SK-N-SH (cell line): ENCODE measurements at regions of chr6 and their contacts with region 1.

Region 1: DNA sequence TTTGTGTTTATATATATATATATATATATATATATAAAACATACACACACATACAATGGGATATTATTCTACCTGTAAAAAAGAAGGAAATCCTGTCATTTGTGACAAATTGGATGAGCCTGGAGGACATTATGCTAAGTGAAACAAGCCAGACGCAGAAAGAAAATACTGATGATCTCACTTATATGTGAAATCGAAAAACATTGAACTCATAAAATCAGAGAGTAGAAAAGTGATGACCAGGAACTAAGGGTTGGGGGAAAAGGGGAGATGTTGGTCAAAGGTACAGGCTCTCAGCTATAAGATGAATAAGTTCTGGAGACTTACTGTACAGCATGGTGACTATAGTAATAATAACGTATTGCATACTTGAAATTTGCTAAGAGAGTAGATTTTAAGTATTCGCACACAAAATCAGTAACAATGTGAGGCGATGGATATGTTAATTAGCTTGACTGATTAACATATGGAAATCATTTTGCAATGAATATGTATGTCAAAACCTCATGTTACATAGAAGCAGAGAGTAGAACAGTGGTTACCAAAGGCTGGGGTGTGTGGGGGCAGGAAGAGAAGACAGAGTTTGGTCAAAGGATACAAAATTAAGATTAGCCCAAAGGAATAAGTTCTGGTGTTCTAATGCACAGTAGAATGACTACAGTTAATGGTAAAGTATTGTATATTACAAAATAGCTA is 92.3 kb upstream of the PHACTR1 start:
- DNase-seq: no peak
- H3K4me3 ChIP-seq: no peak overlapping the region
- H3K27ac ChIP-seq: no peak overlapping the region
- H3K4me1 ChIP-seq: no peaks in the 10 kb centered on the region
- H3K27me3 ChIP-seq: no peaks in the 10 kb centered on the region
- CTCF ChIP-seq: no peak
- EP300 ChIP-seq: no peak
- RAD21 ChIP-seq: no peak

Region 2: DNA sequence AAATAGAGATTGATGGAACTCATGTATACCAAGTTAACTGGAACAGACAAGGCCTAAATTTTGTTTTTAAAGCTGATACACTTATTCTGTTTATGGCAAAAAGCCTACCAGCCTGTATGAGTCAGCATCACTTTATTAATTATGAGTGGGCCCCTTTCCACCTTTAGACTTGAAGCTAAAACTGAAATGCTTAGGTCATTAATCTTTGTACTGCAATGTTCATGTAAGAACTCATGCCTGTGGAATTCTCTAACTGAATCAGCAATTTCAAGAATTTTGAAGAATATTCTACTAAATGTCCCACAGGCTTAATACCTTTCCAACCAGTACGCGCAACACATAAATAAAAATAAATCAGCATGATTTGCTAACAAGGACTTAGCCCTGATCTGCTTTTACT is 47.9 kb before region 1 on chr6:
- CTCF ChIA-PET with region 1: no interaction called
- POLR2A ChIA-PET with region 1: no interaction called
- DNase-seq: no peak
- H3K4me3 ChIP-seq: no peak overlapping the region
- H3K27ac ChIP-seq: peak overlapping the region in 1 of 2 experiments; percentile 47; a peak in 1 of 4 replicates
- H3K4me1 ChIP-seq: peaks cover 0 to 15% of the 10 kb centered on the region in 2 experiments; a peak in 3 of 4 replicates
- H3K27me3 ChIP-seq: no peaks in the 10 kb centered on the region
- CTCF ChIP-seq: no peak
- EP300 ChIP-seq: peak in 1 of 2 experiments; percentile 79; a peak in 2 of 4 replicates
- RAD21 ChIP-seq: no peak

Region 3: GRCh38 chr6:12895721-12896120 is 271.4 kb after region 1 on chr6:
- CTCF ChIA-PET with region 1: interaction called, 19 read pairs
- POLR2A ChIA-PET with region 1: no interaction called
- DNase-seq: no peak
- H3K4me3 ChIP-seq: no peak overlapping the region
- H3K27ac ChIP-seq: no peak overlapping the region
- H3K4me1 ChIP-seq: peaks cover 0 to 12% of the 10 kb centered on the region in 2 experiments; a peak in 2 of 4 replicates
- H3K27me3 ChIP-seq: no peaks in the 10 kb centered on the region
- CTCF ChIP-seq: no peak
- EP300 ChIP-seq: no peak
- RAD21 ChIP-seq: no peak